Ascending aorta (tissue), 2 donors: ENCODE measurements at regions of chr12 and their contacts with region 1.

Region 1: DNA sequence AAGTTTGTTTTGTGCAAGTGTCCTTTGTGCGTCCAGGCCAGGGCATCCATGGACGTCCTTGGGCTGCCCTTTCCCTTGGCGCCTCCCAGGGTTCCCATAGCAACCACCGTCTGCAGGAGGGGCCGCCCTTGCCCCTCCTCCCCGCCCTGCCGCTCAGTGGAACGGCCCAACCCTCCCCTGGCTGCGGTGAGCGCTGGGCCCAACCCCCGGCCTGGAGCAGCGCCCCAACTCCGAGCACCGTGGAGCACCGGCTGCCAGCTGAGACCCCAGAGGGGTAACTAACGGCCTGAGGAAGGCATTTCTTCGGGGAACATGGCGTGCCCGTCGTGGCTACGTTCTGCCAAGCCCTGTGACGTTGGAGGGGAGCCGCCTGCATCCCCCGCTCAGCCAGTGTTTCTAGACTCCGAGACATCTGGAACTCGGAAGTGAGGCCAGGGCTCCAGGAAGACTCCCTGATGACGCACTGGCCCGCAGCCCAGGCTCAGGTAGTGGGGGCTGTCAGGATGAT is 5.3 kb upstream of the ACACB start:
- DNase-seq: peak; percentile 56 to 93
- H3K4me3 ChIP-seq: peak overlapping the region; percentile 69 to 77
- H3K27ac ChIP-seq: peak overlapping the region; percentile 92 to 93
- H3K4me1 ChIP-seq: peaks cover 2 to 19% of the 10 kb centered on the region in 2 donors
- H3K27me3 ChIP-seq: no peaks in the 10 kb centered on the region
- CTCF ChIP-seq: no peak

Region 2: GRCh38 chr12:109154451-109155438 is 43.7 kb after region 1 on chr12:
- intact Hi-C with region 1: loop called (anchors 1 kb)
- DNase-seq: peak; percentile 63 to 90
- H3K4me3 ChIP-seq: peak overlapping the region; percentile 76 to 94
- H3K27ac ChIP-seq: peak overlapping the region; percentile 77 to 86
- H3K4me1 ChIP-seq: peaks cover 0 to 4% of the 10 kb centered on the region in 2 donors
- H3K27me3 ChIP-seq: no peaks in the 10 kb centered on the region
- CTCF ChIP-seq: peak in 1 of 3 experiments; percentile 4